ENCODE measurements at regions of chr11 and their contacts with region 1.

Region 1: DNA sequence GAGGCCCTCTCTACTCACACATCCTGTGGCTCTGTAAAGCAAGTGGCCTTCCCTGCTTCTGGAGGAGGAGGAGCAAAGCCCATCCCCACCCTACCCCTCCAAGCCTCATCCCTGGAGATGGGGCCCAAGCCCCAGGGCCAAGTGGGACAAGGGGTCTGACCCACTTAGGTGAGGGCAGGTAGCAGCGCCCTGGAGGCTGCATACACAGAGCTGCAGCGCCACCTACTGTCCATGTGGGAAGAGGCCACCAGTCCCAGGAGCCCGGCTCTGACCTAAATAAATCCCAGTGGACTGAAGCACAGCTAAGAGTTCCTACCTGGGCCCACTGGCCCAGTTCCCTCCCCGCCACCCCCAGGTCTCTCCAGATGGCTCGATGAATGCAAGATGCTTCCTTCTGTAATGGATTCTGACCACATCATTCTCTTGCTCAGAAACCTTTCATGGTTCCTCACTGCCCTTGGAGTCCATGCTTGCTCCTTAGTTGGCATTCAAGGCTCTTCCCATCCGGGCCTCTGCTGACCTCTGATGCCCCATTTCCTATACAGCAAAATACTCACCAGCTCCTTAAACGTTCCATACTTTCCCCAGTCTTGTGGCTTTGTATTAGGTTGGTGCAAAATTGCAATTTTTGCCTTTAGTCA is 62.1 kb downstream of the THAP12 start:
- DNase-seq: peak; percentile 79
- H3K4me3 ChIP-seq: no peak overlapping the region
- H3K27ac ChIP-seq: no peak overlapping the region
- H3K4me1 ChIP-seq: no peaks in the 10 kb centered on the region
- H3K27me3 ChIP-seq: no peaks in the 10 kb centered on the region
- CTCF ChIP-seq: peak; percentile 99

Region 2: DNA sequence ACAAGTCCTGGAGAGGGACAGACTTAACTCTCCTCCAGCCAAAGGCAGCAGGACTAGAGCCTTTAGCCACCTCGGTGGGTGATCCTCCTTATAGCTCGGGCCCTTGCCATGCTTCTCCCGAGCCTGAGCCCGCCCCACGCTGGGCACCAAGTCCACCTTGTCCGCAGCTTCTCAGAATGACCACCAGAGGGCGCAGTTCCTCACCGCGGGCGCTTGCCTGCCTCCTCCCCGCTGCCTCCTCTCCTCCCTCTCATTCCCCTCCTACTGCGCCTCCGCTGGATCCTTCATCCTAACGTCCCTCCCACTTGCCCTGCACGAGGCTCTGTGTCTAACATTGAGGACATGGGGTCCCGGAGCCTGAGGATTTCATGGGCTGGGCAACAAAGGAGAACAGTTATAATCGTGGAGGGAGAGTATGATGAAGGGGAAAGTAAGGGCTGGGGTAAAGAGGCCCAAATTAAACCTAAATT is 612.6 kb before region 1 on chr11:
- CTCF ChIA-PET with region 1: no interaction called
- POLR2A ChIA-PET with region 1: no interaction called
- intact Hi-C with region 1: loop called (anchors 5 kb)
- DNase-seq: peak; percentile 92
- H3K4me3 ChIP-seq: no peak overlapping the region
- H3K27ac ChIP-seq: no peak overlapping the region
- H3K4me1 ChIP-seq: peaks cover 4% of the 10 kb centered on the region
- H3K27me3 ChIP-seq: no peaks in the 10 kb centered on the region
- CTCF ChIP-seq: peak; percentile 99

Region 3: GRCh38 chr11:75721855-75722668 is 596.8 kb before region 1 on chr11:
- CTCF ChIA-PET with region 1: interaction called, 3 read pairs
- POLR2A ChIA-PET with region 1: no interaction called
- intact Hi-C with region 1: loop called (anchors 5 kb)
- DNase-seq: no peak
- H3K4me3 ChIP-seq: no peak overlapping the region
- H3K27ac ChIP-seq: no peak overlapping the region
- H3K4me1 ChIP-seq: no peaks in the 10 kb centered on the region
- H3K27me3 ChIP-seq: no peaks in the 10 kb centered on the region
- CTCF ChIP-seq: no peak

Region 4: DNA sequence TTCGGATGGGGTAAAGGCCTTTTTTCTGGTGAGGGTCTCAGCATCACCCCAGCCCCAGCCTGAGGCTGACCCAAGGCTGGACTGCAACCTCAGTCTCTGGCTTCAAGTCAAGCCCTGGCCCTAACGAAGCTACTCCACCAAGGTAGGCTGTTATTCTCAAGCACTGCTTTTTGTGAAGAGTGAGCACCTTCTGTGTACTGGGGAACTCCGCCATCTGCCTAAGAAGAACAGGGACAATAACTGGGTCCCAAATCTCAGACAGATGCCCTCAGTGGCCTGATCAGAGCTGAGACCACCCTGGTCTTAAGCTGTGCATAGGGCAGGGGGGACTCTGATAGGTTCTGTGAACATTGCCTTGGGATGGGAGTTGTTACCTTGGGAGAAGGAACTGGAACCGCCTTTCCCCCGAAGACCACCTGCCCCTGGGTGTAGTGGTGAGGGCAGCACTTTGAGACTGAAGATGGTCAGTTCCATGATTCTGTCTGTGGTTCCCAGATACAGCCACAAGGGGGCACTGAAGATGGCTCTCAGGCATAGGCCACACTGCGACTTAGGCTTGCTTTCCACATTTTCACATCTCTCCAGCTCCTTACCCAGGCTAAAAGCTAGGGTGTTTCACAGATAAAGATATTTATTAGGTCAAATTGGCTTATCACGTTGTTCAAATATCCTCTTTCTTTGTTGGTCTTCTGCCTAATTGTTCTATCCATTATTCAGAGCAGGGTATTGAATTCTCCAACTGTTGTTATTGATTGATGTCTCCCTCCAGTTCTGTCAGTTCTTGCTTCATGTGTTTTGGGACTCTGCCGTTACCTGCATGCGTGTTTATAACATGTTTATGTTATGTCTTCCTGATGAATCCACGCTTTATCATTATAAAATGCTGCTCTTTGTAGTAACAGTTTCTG is 515.7 kb before region 1 on chr11:
- CTCF ChIA-PET with region 1: no interaction called
- POLR2A ChIA-PET with region 1: no interaction called
- intact Hi-C with region 1: loop called (anchors 5 kb)
- DNase-seq: peak; percentile 76
- H3K4me3 ChIP-seq: no peak overlapping the region
- H3K27ac ChIP-seq: no peak overlapping the region
- H3K4me1 ChIP-seq: no peaks in the 10 kb centered on the region
- H3K27me3 ChIP-seq: no peaks in the 10 kb centered on the region
- CTCF ChIP-seq: peak; percentile 97

Region 5: GRCh38 chr11:75896843-75897419 is 421.9 kb before region 1 on chr11:
- CTCF ChIA-PET with region 1: no interaction called
- POLR2A ChIA-PET with region 1: no interaction called
- intact Hi-C with region 1: loop called (anchors 5 kb)
- DNase-seq: peak; percentile 75
- H3K4me3 ChIP-seq: no peak overlapping the region
- H3K27ac ChIP-seq: no peak overlapping the region
- H3K4me1 ChIP-seq: no peaks in the 10 kb centered on the region
- H3K27me3 ChIP-seq: no peaks in the 10 kb centered on the region
- CTCF ChIP-seq: peak; percentile 81

Region 6: DNA sequence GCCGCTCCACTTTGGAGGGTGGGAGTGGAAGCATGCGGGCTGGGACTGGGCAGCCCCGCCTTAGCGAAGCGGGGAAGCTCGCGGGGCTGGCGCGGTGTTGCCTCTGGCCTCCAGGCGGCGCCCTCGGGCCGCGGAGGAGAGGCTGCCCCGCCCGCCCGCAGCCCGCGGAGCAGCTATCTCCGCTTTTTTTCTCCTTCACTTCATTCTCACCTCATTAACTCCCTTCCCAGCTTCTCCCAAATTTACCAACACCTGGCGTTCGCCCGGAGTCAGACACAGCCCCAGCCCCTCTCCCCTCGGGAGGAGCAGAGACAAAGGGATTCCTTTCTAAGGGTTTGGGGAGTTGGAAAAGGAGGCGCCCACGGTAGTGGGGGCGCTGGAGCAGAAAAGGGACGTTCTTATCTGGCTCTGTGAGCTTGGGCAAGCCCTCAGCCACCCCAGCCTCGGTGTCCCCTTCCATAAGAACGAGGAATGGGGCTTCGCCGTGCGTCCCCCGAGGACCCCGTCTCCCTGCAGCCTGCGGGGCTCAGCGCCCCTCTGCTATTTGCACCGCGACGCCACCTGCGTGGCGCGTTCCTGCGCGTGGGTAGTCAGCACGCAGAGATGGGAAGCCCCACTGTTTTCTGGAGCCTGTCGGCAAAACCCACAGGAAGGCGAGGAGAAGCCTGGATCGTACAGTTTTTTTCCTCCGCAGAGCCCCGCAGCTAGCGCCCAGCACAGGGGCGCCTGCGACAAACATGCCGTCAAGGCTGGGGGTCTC is 111.0 kb before region 1 on chr11:
- CTCF ChIA-PET with region 1: interaction called, 40 read pairs
- POLR2A ChIA-PET with region 1: no interaction called
- intact Hi-C with region 1: loop called (anchors 1 kb)
- DNase-seq: peak; percentile 93
- H3K4me3 ChIP-seq: peak overlapping the region; percentile 56
- H3K27ac ChIP-seq: no peak overlapping the region
- H3K4me1 ChIP-seq: peaks cover 34% of the 10 kb centered on the region
- H3K27me3 ChIP-seq: peaks cover 69% of the 10 kb centered on the region
- CTCF ChIP-seq: peak; percentile 93

Region 7: DNA sequence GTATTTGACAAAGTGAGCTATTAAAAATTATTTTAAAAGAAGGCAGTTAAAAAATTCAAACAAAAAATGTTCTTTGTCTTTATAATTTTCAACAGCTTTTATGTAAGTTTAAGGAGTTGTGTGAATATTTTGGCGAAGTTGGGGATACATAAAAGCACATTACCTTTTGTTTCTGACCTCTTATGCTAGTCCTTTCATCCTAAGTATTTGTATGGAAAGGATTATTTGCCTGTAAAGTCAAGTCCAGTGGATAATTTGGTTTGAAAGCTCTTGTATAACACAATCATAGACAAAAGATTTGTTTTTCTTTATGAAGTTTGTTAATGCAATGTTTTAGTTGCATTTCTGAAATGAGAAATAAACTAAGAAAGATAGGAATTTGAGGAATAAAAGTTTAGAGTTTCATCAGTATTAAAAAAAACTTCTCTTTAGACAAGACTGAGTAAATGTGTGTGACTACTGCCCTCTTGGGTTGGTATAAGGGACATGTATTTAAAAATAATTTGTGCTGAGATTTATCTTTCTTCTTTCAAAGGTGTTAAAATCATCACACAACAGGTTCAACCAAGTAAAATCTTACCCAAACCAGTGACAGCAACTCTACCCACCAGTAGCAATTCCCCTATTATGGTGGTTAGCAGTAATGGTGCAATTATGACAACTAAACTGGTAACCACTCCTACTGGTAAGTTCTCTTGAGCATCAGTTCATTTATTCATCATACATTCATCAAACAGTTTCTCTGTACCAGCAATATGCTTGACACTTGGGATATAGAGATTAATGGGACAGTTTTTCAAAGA is 194.2 kb after region 1 on chr11:
- CTCF ChIA-PET with region 1: interaction called, 3 read pairs
- POLR2A ChIA-PET with region 1: no interaction called
- intact Hi-C with region 1: loop called (anchors 5 kb)
- DNase-seq: peak; percentile 52
- H3K4me3 ChIP-seq: no peak overlapping the region
- H3K27ac ChIP-seq: no peak overlapping the region
- H3K4me1 ChIP-seq: peaks cover 26% of the 10 kb centered on the region
- H3K27me3 ChIP-seq: no peaks in the 10 kb centered on the region
- CTCF ChIP-seq: peak; percentile 68